HepG2 (cell line): ENCODE measurements at regions of chr7 and their contacts with region 1.

Region 1: GRCh38 chr7:65422670-65423069 is 49.0 kb downstream of the ZNF92 start:
- DNase-seq: no peak
- ATAC-seq: no peak
- H3K4me3 ChIP-seq: no peak overlapping the region
- H3K27ac ChIP-seq: no peak overlapping the region
- H3K4me1 ChIP-seq: peaks cover 42% of the 10 kb centered on the region
- H3K27me3 ChIP-seq: no peaks in the 10 kb centered on the region
- CTCF ChIP-seq: no peak
- EP300 ChIP-seq: no peak
- POLR2A ChIP-seq: no peak
- RAD21 ChIP-seq: no peak

Region 2: DNA sequence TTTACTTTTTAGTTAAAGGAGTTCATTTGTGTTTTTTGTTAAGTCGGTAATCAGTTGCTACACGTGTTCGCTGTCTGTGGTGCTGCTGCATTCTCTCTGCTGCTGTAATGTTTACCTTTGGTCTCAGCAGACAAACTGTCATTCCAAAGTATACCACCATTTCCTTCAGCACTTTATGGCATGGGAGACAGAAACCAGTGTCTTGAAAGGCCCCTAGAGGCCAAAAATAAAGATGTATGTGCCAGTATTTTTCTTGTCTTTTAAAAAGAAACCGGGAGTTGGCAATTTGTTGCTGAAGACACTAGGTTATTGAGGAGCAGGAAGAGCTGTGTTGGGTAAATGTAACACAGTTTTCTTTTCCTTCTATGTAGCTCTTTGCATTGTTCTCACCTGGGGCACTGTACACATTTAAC is 24.9 kb before region 1 on chr7:
- CTCF ChIA-PET with region 1: no interaction called
- POLR2A ChIA-PET with region 1: no interaction called
- in situ Hi-C with region 1: no loop called
- intact Hi-C with region 1: loop called (anchors 2 kb)
- DNase-seq: peak; percentile 86
- ATAC-seq: peak; percentile 100
- H3K4me3 ChIP-seq: no peak overlapping the region; a peak in 1 of 6 replicates
- H3K27ac ChIP-seq: peak overlapping the region; percentile 50
- H3K4me1 ChIP-seq: peaks cover 40% of the 10 kb centered on the region
- H3K27me3 ChIP-seq: no peaks in the 10 kb centered on the region
- CTCF ChIP-seq: peak; percentile 36; the same call in 1 of the 2 replicates
- EP300 ChIP-seq: peak in 1 of 2 experiments; percentile 71; a peak in 2 of 4 replicates
- POLR2A ChIP-seq: no peak
- RAD21 ChIP-seq: peak; percentile 48; the same call in 1 of the 2 replicates

Region 3: DNA sequence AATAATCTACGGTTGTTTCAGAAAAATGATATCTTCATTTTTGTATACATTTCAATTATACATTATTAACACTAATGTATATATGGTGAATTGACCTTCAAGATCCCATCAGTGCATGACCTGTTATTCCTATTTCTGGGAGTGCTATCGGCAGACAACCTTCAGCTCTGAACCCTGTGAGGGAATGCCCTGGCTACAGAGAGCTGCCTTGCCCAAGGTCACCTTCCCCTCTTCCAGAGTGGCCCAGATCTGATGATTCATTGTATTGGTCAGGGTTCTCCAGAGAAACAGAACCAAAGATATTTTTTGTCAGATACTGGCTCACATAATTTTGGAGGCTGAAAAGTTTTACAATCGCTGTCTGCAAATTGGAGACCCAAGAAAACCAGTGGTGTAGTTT is 186.5 kb after region 1 on chr7:
- CTCF ChIA-PET with region 1: no interaction called
- POLR2A ChIA-PET with region 1: no interaction called
- in situ Hi-C with region 1: no loop called
- intact Hi-C with region 1: no loop called
- DNase-seq: no peak
- ATAC-seq: no peak
- H3K4me3 ChIP-seq: no peak overlapping the region
- H3K27ac ChIP-seq: no peak overlapping the region
- H3K4me1 ChIP-seq: no peaks in the 10 kb centered on the region
- H3K27me3 ChIP-seq: no peaks in the 10 kb centered on the region
- CTCF ChIP-seq: no peak
- EP300 ChIP-seq: no peak
- POLR2A ChIP-seq: no peak
- RAD21 ChIP-seq: no peak